ENCODE measurements at regions of chr1 and their contacts with region 1.

Region 1: GRCh38 chr1:11262171-11263049 is at the start of gene MTOR:
- DNase-seq: peak; percentile 100
- H3K4me3 ChIP-seq: peak within 1 kb of the TSS; percentile 90
- H3K27ac ChIP-seq: peak within 1 kb of the TSS; percentile 46
- H3K4me1 ChIP-seq: peaks cover 20% of the 10 kb centered on the region
- CTCF ChIP-seq: peak; percentile 65
- total RNA-seq, gene MTOR: 41.1 and 41.5 TPM in 2 replicates

Region 2: DNA sequence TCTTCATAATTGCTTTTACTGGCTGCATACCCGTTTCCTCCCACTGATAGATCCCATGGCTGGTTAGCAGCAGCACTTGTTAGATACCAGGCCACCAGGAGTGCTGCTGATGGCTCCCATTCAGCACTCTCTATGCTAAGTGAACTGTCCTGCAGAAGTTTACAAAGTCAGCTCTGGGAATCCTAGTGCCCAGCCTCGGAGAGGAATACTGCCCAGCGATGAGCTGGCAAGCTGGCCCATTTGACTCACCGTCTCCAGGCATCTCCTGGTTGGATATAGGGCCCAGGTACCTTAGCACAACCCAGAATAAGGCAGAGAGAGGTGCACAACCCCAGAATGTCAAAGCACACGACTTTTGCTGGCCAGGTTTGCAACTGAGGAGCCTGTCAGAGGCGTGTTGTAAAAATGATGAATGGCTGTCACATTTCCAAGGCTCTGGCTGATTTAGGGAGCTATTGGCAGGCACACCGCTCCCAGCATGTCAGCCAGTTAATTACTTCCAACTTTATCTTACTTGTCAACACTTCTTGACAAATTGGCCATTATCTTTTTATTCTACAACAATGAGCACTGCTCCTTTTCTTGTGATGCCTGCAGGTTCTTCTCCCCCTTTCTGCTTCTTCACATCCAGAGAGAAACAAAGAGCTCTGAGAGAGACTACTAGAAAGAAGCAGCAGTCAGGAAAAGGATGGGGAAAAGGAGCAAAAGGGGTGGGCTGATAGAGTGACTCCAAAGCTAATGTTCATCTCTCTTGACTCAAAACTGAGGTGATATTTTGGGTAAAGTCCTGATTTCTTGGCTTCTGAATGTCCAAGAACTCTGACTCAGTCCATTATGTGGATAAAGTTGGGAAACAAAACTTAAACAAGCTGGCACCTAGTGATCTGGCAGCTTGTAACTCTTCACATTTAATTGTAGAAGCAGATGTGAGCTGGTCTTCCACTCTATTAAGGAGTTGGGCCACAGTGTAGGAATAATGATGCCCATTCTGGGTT is 84.1 kb before region 1 on chr1:
- CTCF ChIA-PET with region 1: no interaction called
- POLR2A ChIA-PET with region 1: no interaction called
- intact Hi-C with region 1: no loop called
- DNase-seq: no peak
- H3K4me3 ChIP-seq: no peak overlapping the region
- H3K27ac ChIP-seq: no peak overlapping the region
- H3K4me1 ChIP-seq: no peaks in the 10 kb centered on the region
- CTCF ChIP-seq: no peak

Region 3: GRCh38 chr1:11207898-11208611 is 54.4 kb before region 1 on chr1:
- CTCF ChIA-PET with region 1: no interaction called
- POLR2A ChIA-PET with region 1: no interaction called
- intact Hi-C with region 1: no loop called
- DNase-seq: no peak
- H3K4me3 ChIP-seq: no peak overlapping the region
- H3K27ac ChIP-seq: no peak overlapping the region
- H3K4me1 ChIP-seq: no peaks in the 10 kb centered on the region
- CTCF ChIP-seq: no peak

Region 4: GRCh38 chr1:11227106-11228077 is 35.0 kb before region 1 on chr1:
- CTCF ChIA-PET with region 1: no interaction called
- POLR2A ChIA-PET with region 1: interaction called, 10 read pairs
- intact Hi-C with region 1: no loop called
- DNase-seq: peak; percentile 73
- H3K4me3 ChIP-seq: peak overlapping the region; percentile 33
- H3K27ac ChIP-seq: peak overlapping the region; percentile 86
- H3K4me1 ChIP-seq: peaks cover 51% of the 10 kb centered on the region
- CTCF ChIP-seq: no peak

Region 5: GRCh38 chr1:11301601-11302000 is 39.2 kb after region 1 on chr1:
- CTCF ChIA-PET with region 1: no interaction called
- POLR2A ChIA-PET with region 1: no interaction called
- intact Hi-C with region 1: no loop called
- DNase-seq: no peak
- H3K4me3 ChIP-seq: no peak overlapping the region
- H3K27ac ChIP-seq: no peak overlapping the region
- H3K4me1 ChIP-seq: no peaks in the 10 kb centered on the region
- CTCF ChIP-seq: no peak

Region 6: GRCh38 chr1:11453742-11454491 is 191.5 kb after region 1 on chr1:
- CTCF ChIA-PET with region 1: no interaction called
- POLR2A ChIA-PET with region 1: no interaction called
- intact Hi-C with region 1: no loop called
- DNase-seq: no peak
- H3K4me3 ChIP-seq: no peak overlapping the region
- H3K27ac ChIP-seq: no peak overlapping the region
- H3K4me1 ChIP-seq: no peaks in the 10 kb centered on the region
- CTCF ChIP-seq: no peak

Measured in OCI-LY7 (cell line).